Psoas muscle (tissue), 8 donors: ENCODE measurements at regions of chr1 and their contacts with region 1.

Region 1: DNA sequence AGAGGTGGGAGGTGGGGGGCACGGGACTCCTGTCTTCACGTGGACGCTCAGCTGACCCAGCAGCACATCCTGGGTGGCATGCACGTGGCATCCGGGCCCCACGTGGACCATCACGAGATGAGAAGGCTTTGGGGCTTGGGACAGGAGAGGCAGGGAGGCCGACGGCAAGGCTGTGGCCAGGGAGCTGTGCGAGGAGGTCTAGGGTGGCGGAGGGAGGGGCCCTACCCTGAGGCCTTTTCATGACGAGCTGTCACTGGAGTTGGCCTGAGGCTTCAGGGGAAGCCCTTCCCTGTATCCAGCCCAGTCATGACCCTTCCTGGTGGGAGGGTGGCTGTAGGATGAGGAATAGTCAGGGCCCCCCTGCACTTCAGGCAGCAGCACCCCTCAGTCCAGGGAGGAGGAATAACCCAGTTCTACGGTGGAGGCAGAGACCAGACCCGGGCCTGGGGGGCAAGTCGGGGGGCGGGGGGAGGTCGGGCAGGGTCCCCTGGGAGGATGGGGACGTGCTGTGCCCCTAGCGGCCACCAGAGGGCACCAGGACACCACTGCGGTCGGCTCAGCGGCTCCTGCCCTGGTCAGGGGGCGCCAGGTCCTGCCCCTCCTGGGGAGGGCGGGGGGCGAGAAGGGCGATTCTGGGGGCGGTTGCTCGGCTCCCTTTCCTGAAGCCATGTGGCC is 2.0 kb upstream of the PERM1 start:
- DNase-seq: peak; percentile 55 to 81
- ATAC-seq: no peak
- H3K4me3 ChIP-seq: peak overlapping the region; percentile 49
- H3K27ac ChIP-seq: no peak overlapping the region
- H3K4me1 ChIP-seq: peaks cover 32% of the 10 kb centered on the region
- H3K27me3 ChIP-seq: no peaks in the 10 kb centered on the region
- CTCF ChIP-seq: peak; percentile 93

Region 2: DNA sequence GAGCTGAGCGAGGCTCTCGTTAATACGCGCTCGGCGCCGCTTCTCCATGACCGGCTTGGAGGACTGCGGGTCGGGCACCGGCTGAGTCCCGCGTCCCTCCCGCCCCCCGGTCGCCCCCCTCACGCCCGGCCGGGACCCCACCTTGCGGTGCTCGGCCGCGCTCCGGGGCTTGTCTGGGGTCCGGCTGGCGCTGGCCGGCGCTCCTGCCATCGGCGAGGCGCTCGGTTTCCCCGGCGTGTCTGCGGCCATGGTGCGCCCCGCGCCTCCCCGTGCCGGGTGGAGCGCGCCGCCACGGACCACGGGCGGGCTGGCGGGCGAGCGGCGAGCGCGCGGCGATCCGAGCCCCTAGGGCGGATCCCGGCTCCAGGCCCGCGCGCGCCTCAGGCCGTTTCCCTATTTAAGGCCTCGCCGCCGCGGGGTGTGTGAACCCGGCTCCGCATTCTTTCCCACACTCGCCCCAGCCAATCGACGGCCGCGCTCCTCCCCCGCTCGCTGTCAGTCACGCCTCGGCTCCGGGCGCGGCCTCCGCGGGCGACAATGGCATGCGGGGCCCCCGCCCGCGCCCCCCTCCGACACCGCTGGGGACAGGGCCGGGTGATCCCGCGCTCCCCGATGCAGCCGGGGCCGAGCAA is 15.9 kb after region 1 on chr1 and contains the start of gene HES4:
- intact Hi-C with region 1: loop called in 1 of 2 experiments (anchors 2 kb)
- DNase-seq: peak; percentile 90
- ATAC-seq: peak; percentile 77 to 84 (median 82)
- H3K4me3 ChIP-seq: peak within 1 kb of the TSS; percentile 81
- H3K27ac ChIP-seq: peak within 1 kb of the TSS; percentile 92
- H3K4me1 ChIP-seq: peaks cover 1% of the 10 kb centered on the region
- H3K27me3 ChIP-seq: peaks cover 0 to 10% (median 0%) of the 10 kb centered on the region in 3 donors
- CTCF ChIP-seq: no peak
- total RNA-seq, gene HES4: 7.2 to 21.8 (median 12.6) TPM

Region 3: GRCh38 chr1:1059494-1060280 is 75.8 kb after region 1 on chr1:
- intact Hi-C with region 1: loop called (anchors 1 to 2 kb)
- DNase-seq: peak; percentile 89 to 94
- ATAC-seq: peak; percentile 90 to 97 (median 94)
- H3K4me3 ChIP-seq: peak overlapping the region; percentile 72
- H3K27ac ChIP-seq: no peak overlapping the region
- H3K4me1 ChIP-seq: no peaks in the 10 kb centered on the region
- H3K27me3 ChIP-seq: peaks cover 0 to 74% (median 34%) of the 10 kb centered on the region in 3 donors
- CTCF ChIP-seq: no peak

Region 4: DNA sequence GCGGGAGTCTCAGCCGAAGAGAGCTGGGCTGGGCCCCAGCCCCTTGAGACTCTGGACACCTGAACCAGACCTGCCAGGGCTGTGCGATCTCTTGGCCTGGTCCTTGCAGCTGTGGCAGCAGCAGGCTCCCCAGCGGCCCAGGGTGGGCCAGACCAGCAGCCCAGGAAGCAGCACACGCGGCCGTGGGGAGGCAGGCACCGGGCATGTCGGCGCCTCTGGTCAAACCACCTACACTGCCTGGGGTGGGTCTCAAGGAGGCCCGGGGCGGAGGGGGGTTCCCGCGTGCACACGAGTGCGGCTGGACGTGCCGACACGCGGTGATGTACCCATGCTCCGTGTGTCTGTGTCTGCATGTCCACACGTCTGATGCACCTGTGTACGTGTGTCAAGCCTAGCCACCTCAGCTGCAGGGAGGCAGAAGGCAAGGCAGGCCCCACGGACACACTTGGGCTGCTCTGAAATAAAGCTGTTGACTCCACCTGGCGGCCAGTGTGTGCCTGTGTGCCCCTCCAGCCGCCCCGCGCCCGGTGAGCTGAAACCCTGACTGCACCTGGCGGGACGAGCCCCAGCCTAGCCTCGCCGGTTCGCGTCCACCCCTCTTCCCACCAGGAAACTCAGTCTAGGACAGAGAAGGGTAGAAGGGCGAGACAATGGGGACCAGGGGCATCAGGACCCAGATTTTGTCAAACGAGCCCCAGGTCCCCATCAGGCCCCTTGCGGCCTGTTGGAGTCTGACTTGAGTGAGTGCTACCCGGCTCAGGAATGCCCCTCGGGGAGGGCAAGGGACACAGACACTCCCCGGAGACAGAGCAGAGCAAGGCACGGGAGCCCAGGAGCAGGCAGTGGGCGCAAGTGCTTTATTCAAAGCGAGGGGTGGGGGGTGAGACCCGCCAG is 307.9 kb after region 1 on chr1:
- intact Hi-C with region 1: loop called in 1 of 2 experiments (anchors 5 kb)
- DNase-seq: peak; percentile 58 to 84
- ATAC-seq: peak; percentile 61 to 87 (median 74)
- H3K4me3 ChIP-seq: no peak overlapping the region
- H3K27ac ChIP-seq: no peak overlapping the region
- H3K4me1 ChIP-seq: no peaks in the 10 kb centered on the region
- H3K27me3 ChIP-seq: peaks cover 0 to 10% (median 0%) of the 10 kb centered on the region in 3 donors
- CTCF ChIP-seq: peak; percentile 61